ENCODE measurements at regions of chr10 and their contacts with region 1.

Region 1: DNA sequence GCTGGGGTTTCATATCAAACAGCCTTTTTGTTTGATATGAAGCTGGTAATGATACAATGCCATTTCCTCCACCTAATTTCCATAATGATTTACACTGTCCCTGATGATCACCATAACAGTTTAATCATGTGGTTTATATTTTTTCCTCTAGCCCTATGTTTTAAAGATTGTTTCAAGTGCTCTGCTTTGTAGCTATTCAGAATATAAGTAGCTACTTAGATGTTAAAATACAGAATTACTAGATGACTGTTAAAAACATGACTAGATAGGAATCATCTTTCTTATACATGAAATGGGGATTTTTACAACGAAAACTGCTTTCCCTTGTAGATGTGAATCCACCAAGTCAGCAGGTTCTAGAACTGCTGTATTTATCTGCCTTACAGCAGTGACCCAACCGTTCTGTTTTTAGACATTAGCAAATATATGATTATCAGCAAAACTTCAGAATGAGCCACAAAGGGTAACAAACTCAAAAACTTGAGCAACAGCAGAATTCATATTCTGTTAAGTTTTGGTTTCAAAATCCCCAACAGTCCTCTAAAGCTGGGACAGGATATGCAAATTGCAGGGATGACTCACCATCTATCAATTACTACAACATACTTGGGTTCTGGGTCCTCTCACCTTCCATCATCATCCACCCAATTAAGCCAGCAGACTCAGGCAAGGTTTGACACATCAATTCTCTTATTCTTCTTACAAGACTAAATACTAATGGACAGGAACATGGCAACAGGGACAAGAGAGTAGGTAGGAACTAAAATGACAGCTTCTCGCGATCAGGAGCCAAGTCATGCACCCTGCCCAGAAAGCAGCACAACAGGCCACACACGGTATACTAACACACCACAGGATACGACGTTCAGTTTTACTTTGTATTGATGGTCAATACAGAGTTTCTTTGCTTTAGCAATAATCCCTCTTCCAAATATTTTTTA is 83.9 kb downstream of the PIP4K2A start:
- DNase-seq: peak; percentile 57
- ATAC-seq: peak; percentile 79
- H3K4me3 Mint-ChIP-seq: peak overlapping the region; percentile 61
- H3K27ac Mint-ChIP-seq: peak overlapping the region; percentile 96
- H3K4me1 Mint-ChIP-seq: peaks cover 95% of the 10 kb centered on the region
- H3K27me3 Mint-ChIP-seq: no peaks in the 10 kb centered on the region

Region 2: GRCh38 chr10:22599048-22599561 is 31.4 kb before region 1 on chr10:
- CTCF ChIA-PET with region 1: interaction called, 3 read pairs
- POLR2A ChIA-PET with region 1: no interaction called
- intact Hi-C with region 1: loop called in 1 of 2 experiments (anchors 1 kb)
- DNase-seq: no peak
- ATAC-seq: peak; percentile 62
- H3K4me3 Mint-ChIP-seq: no peak overlapping the region
- H3K27ac Mint-ChIP-seq: peak overlapping the region; percentile 66
- H3K4me1 Mint-ChIP-seq: peaks cover 77% of the 10 kb centered on the region
- H3K27me3 Mint-ChIP-seq: no peaks in the 10 kb centered on the region

Region 3: GRCh38 chr10:22611425-22612115 is 18.9 kb before region 1 on chr10:
- CTCF ChIA-PET with region 1: interaction called, 13 read pairs
- POLR2A ChIA-PET with region 1: interaction called, 15 read pairs
- intact Hi-C with region 1: loop called (anchors 1 to 2 kb)
- DNase-seq: peak; percentile 73
- ATAC-seq: peak; percentile 87
- H3K4me3 Mint-ChIP-seq: peak overlapping the region; percentile 65
- H3K27ac Mint-ChIP-seq: peak overlapping the region; percentile 76
- H3K4me1 Mint-ChIP-seq: peaks cover 92% of the 10 kb centered on the region
- H3K27me3 Mint-ChIP-seq: no peaks in the 10 kb centered on the region

Region 4: DNA sequence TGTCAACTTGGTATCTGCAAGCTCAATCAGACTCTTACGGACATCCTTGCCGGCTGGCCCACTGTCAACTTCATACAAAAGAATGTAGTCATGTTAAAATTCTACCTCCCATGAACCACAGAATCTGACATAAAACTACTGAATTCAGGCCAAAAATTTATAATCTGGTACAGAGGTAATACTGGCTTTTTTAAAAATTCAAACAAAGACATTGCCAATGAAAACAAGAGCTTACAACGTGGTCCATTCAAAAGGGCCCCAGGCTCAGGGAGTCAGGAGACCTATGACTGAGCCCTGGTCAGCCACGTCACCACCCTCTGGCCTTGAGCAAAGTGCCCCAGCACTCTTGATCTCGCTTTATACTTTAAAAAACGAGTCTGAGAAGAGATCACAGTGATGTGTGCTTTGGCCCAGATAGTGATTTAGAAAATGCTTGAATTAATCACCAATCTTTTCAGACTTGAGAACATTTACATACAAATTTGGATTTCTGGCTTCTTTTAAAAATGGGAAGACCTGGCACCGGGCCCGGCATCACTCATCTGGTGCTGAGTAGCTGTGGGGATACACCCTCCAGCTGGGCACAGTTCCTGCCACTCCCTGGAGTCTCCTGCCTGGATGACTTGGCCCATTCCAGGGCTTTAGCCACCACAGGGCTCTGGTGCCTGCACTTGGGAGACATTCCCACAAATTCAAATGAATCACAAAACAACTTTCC is 10.2 kb before region 1 on chr10:
- CTCF ChIA-PET with region 1: interaction called, 8 read pairs
- POLR2A ChIA-PET with region 1: interaction called, 4 read pairs
- intact Hi-C with region 1: loop called in 1 of 2 experiments (anchors 1 kb)
- DNase-seq: peak; percentile 56
- ATAC-seq: peak; percentile 47
- H3K4me3 Mint-ChIP-seq: no peak overlapping the region
- H3K27ac Mint-ChIP-seq: peak overlapping the region; percentile 78
- H3K4me1 Mint-ChIP-seq: peaks cover 97% of the 10 kb centered on the region
- H3K27me3 Mint-ChIP-seq: no peaks in the 10 kb centered on the region

Region 5: GRCh38 chr10:22648547-22648961 is 18.1 kb after region 1 on chr10:
- CTCF ChIA-PET with region 1: interaction called, 26 read pairs
- POLR2A ChIA-PET with region 1: interaction called, 8 read pairs
- intact Hi-C with region 1: loop called (anchors 1 kb)
- DNase-seq: no peak
- ATAC-seq: peak; percentile 8
- H3K4me3 Mint-ChIP-seq: peak overlapping the region; percentile 49
- H3K27ac Mint-ChIP-seq: peak overlapping the region; percentile 93
- H3K4me1 Mint-ChIP-seq: peaks cover 90% of the 10 kb centered on the region
- H3K27me3 Mint-ChIP-seq: no peaks in the 10 kb centered on the region

Region 6: GRCh38 chr10:22655311-22655981 is 24.9 kb after region 1 on chr10:
- CTCF ChIA-PET with region 1: interaction called, 26 read pairs
- POLR2A ChIA-PET with region 1: interaction called, 6 read pairs
- intact Hi-C with region 1: loop called (anchors 1 kb)
- DNase-seq: peak; percentile 62
- ATAC-seq: peak; percentile 57
- H3K4me3 Mint-ChIP-seq: peak overlapping the region; percentile 63
- H3K27ac Mint-ChIP-seq: peak overlapping the region; percentile 85
- H3K4me1 Mint-ChIP-seq: peaks cover 98% of the 10 kb centered on the region
- H3K27me3 Mint-ChIP-seq: no peaks in the 10 kb centered on the region